ENCODE measurements at regions of chr11 and their contacts with region 1.

Region 1: GRCh38 chr11:79498667-79499066 is 57.8 kb upstream of the TENM4 start:
- DNase-seq: no peak
- ATAC-seq: no peak
- H3K4me3 Mint-ChIP-seq: no peak overlapping the region
- H3K27ac Mint-ChIP-seq: no peak overlapping the region
- H3K4me1 Mint-ChIP-seq: no peaks in the 10 kb centered on the region
- H3K27me3 Mint-ChIP-seq: peaks cover 3% of the 10 kb centered on the region

Region 2: DNA sequence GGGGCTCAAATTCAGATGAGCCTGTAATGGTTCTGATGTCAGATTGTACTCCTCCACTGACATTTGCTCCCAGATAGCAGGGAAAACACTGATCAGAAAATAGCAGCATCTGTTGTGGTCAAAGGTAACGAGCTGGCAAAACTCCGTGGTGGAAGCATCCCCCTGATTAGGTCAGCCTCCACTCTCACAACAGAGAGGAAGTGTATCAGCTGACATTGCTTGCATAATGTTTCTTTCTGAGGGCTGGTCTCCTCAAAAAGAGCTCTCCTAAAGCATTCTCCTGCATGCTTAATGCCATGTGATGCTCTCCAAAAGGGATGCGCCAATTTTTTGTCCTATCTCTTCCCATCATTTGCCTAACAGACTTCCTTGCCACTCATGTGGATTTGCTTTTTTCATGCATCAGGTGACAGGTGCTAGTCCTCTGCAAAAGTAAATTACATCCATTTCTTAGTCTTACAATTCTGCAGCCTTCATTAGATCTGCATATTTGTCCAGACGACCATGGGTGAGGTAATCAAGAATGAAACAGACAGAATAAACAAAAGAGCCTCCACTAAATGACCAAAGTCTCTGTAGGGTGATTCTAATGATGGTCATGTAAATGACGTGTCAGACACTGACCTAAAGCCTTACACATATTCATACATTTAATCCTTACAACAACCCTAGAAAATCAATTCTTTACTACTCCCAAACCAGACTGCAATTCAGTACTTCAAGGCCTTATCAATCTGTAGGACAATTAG is 51.5 kb before region 1 on chr11:
- CTCF ChIA-PET with region 1: no interaction called
- POLR2A ChIA-PET with region 1: no interaction called
- intact Hi-C with region 1: loop called in 1 of 2 experiments (anchors 5 kb)
- DNase-seq: no peak
- ATAC-seq: no peak
- H3K4me3 Mint-ChIP-seq: no peak overlapping the region
- H3K27ac Mint-ChIP-seq: no peak overlapping the region
- H3K4me1 Mint-ChIP-seq: no peaks in the 10 kb centered on the region
- H3K27me3 Mint-ChIP-seq: peaks cover 18% of the 10 kb centered on the region

Region 3: DNA sequence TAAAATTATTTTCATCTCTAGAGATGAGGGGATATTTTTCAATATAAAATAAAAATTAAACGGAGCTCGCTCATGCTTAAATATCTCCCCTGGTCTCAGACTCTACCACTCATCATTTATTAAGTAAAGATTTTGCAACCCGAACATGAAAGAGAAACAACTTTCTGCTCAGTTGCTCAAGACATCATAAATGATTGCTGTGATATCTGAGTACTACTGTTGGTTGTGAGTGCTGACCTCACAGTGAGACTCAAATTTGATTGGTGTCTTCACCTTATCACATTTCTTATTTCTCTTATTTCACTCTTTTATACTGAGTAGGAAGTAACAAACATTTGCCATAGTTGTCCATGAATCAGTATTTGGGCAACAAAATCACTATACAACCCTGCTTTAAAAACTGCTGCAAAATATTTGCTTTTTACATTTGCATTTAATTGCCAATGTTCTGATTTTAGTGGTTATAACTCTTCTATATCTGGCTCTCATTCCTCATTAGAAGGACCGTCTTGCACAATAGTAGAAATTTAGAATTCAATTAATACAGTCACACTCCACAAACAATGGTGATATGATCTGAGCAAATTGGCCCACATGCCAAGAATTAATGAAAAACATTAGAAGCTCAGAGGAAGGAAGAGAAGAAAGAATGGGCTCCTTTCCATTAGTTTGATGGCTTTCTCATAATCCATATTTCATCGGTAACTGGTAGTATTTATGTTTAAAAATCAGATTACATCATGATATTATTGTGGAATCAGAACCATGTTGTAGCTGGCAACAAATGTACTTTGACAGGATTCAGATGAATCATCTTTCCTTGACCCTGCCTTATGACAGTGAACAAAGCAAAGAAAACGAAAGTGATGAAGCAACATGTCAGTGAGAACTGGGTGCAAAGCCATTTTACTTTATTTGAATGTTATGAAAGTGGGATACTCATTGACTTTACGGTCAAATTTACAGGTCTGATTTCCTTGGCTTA is 915.8 kb after region 1 on chr11:
- CTCF ChIA-PET with region 1: no interaction called
- POLR2A ChIA-PET with region 1: no interaction called
- intact Hi-C with region 1: no loop called
- DNase-seq: no peak
- ATAC-seq: no peak
- H3K4me3 Mint-ChIP-seq: no peak overlapping the region
- H3K27ac Mint-ChIP-seq: no peak overlapping the region
- H3K4me1 Mint-ChIP-seq: no peaks in the 10 kb centered on the region
- H3K27me3 Mint-ChIP-seq: no peaks in the 10 kb centered on the region